ENCODE measurements at regions of chr19 and their contacts with region 1.

Region 1: GRCh38 chr19:55476100-55476775 is at the start of gene ZNF628:
- DNase-seq: peak; percentile 98 to 99
- H3K4me3 ChIP-seq: peak within 1 kb of the TSS; percentile 66 to 79 (median 67)
- H3K27ac ChIP-seq: peak within 1 kb of the TSS; percentile 96 to 98
- H3K4me1 ChIP-seq: peaks cover 5 to 8% of the 10 kb centered on the region in 2 donors
- H3K27me3 ChIP-seq: no peaks in the 10 kb centered on the region
- CTCF ChIP-seq: no peak
- POLR2A ChIP-seq: peak; percentile 45
- total RNA-seq, gene ZNF628: 2.1 to 4.4 (median 4.3) TPM

Region 2: DNA sequence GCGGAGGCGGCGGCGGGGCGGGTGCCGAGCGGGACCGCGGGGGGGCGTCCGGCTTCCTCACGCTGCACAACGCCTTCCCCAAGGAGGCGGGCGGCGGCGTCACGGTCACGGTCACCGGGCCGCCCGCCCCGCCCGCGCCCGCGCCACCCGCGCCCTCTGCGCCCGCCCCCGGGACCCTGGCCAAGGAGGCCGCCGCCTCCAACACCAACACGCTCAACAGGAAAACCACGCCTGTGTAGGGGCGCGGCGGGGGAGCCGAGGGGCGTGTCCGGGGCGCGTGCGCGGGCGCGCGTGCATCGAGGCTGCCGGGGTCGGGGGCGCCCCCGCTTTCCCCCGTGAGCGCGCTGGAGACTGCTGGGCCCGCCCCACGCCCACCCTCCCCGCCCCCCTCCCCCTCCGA is 1493.6 kb before region 1 on chr19:
- intact Hi-C with region 1: loop called (anchors 10 kb)
- DNase-seq: peak in 1 of 2 donors; percentile 20
- H3K4me3 ChIP-seq: peak overlapping the region in 2 of 3 donors; percentile 34 to 62
- H3K27ac ChIP-seq: no peak overlapping the region
- H3K4me1 ChIP-seq: no peaks in the 10 kb centered on the region
- H3K27me3 ChIP-seq: peaks cover 10 to 63% of the 10 kb centered on the region in 2 donors
- CTCF ChIP-seq: no peak
- POLR2A ChIP-seq: no peak

Region 3: GRCh38 chr19:55516878-55517620 is 40.8 kb after region 1 on chr19:
- intact Hi-C with region 1: no loop called
- DNase-seq: peak; percentile 92 to 95
- H3K4me3 ChIP-seq: peak overlapping the region; percentile 45 to 74 (median 58)
- H3K27ac ChIP-seq: peak overlapping the region; percentile 92 to 96
- H3K4me1 ChIP-seq: no peaks in the 10 kb centered on the region
- H3K27me3 ChIP-seq: no peaks in the 10 kb centered on the region
- CTCF ChIP-seq: peak; percentile 81 to 96 (median 84)
- POLR2A ChIP-seq: no peak

Region 4: GRCh38 chr19:56273563-56274117 is 797.4 kb after region 1 on chr19:
- intact Hi-C with region 1: no loop called
- DNase-seq: no peak
- H3K4me3 ChIP-seq: no peak overlapping the region
- H3K27ac ChIP-seq: no peak overlapping the region
- H3K4me1 ChIP-seq: no peaks in the 10 kb centered on the region
- H3K27me3 ChIP-seq: no peaks in the 10 kb centered on the region
- CTCF ChIP-seq: no peak
- POLR2A ChIP-seq: no peak

Region 5: DNA sequence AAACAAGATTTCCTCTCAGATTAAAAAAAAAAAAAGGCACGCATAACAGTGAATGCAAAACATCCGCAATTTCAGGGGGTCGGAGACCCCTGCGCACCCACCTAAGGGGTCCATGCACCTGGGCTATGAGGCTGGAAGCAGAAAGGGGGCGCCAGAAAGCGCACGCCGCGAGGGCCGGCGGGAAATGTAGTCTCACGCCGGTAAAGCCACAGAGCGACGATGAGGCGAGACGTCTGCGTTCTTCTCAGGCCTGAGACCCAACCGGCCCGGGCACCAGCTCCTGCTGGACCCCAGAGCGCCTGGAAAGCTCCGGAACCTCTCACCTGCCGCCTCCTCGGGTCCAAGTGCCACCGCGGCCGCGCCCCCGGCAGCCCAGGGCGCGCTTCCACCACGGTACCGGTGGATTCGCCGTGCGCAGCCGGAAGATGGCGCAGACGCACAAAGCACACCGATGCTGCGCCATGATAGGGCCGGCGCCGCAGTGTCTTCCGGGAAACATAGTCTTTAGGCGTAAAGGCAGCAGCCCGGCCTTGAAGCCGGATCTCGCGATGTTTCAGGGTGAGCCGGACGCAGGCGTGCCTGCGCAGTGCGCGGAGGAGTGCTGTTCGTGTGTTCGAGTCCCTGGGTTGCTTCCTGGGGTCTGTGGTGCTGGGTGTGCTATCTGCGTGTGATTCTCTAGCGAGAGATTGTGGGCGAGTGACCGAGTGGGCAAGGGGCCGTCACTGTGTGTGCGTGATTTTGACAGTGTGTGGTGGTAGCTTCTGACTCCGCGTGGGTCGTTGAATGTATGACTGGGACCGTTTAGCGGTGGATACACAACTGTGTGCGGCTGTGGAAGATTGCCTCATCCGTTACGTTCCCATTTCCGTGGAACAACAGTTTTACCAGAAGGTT is 917.1 kb after region 1 on chr19 and contains the start of gene ZNF582:
- intact Hi-C with region 1: no loop called
- DNase-seq: peak; percentile 91 to 94
- H3K4me3 ChIP-seq: peak within 1 kb of the TSS; percentile 75 to 90 (median 77)
- H3K27ac ChIP-seq: peak within 1 kb of the TSS; percentile 96 to 98
- H3K4me1 ChIP-seq: peaks cover 0 to 7% of the 10 kb centered on the region in 2 donors
- H3K27me3 ChIP-seq: no peaks in the 10 kb centered on the region
- CTCF ChIP-seq: peak; percentile 16 to 58 (median 41)
- POLR2A ChIP-seq: peak; percentile 34
- total RNA-seq, gene ZNF582: 4.3 to 9.5 (median 8.2) TPM